ENCODE measurements at regions of chr2 and their contacts with region 1.

Region 1: GRCh38 chr2:8525582-8526402 is 156.1 kb upstream of the ID2 start:
- DNase-seq: peak; percentile 94 to 97 (median 95)
- ATAC-seq: peak; percentile 96
- H3K4me3 ChIP-seq: no peak overlapping the region
- H3K27ac ChIP-seq: peak overlapping the region; percentile 79
- H3K4me1 ChIP-seq: peaks cover 20 to 24% of the 10 kb centered on the region in 2 experiments
- H3K27me3 ChIP-seq: no peaks in the 10 kb centered on the region; a peak in 1 of 5 replicates
- CTCF ChIP-seq: peak; percentile 87 to 96 (median 90)
- EP300 ChIP-seq: peak; percentile 91
- POLR2A ChIP-seq: no peak
- RAD21 ChIP-seq: peak; percentile 97 to 99

Region 2: DNA sequence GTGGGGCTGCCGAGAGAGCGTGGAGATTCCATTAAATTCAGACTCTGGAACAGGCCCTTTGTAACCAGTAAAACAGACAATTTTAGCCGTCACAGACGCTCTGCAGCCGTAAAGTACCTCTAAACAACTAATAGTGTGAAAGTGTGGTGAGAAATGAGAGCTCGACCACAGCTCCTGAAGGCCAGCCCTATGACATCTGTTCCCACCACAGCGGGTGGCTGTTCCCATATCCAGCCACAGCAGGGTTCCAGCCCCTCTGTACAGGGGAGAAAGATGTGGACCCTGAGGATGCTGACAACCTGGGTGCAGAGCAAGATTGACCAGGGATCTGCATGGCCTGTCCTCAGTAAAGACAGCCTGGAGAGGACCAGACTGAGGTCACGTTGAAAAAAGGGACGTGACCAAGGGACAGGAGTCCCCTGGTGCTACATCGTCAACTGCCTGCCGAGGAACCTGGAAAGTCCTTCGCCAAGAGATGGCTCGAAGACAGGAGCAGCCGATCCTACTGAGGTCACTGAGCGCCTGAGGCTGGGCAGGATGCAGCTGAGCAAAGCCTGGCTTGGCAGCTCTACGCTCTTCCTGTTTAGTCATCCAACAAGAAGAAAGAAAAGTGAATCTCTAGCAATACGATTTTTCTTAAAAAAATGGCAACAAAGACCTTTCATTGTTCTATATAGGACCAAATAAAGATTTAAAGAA is 776.9 kb before region 1 on chr2:
- CTCF ChIA-PET with region 1: no interaction called
- POLR2A ChIA-PET with region 1: no interaction called
- in situ Hi-C with region 1: no loop called
- intact Hi-C with region 1: no loop called
- DNase-seq: no peak
- ATAC-seq: no peak
- H3K4me3 ChIP-seq: no peak overlapping the region
- H3K27ac ChIP-seq: no peak overlapping the region
- H3K4me1 ChIP-seq: no peaks in the 10 kb centered on the region
- H3K27me3 ChIP-seq: peaks cover 0 to 3% of the 10 kb centered on the region in 2 experiments; a peak in 1 of 5 replicates
- CTCF ChIP-seq: no peak
- EP300 ChIP-seq: no peak
- POLR2A ChIP-seq: no peak
- RAD21 ChIP-seq: no peak

Region 3: GRCh38 chr2:7881063-7881462 is 644.7 kb before region 1 on chr2:
- CTCF ChIA-PET with region 1: no interaction called
- POLR2A ChIA-PET with region 1: no interaction called
- in situ Hi-C with region 1: no loop called
- intact Hi-C with region 1: no loop called
- DNase-seq: no peak
- ATAC-seq: no peak
- H3K4me3 ChIP-seq: no peak overlapping the region
- H3K27ac ChIP-seq: no peak overlapping the region
- H3K4me1 ChIP-seq: no peaks in the 10 kb centered on the region
- H3K27me3 ChIP-seq: peaks cover 0 to 4% of the 10 kb centered on the region in 2 experiments; a peak in 2 of 5 replicates
- CTCF ChIP-seq: no peak
- EP300 ChIP-seq: no peak
- POLR2A ChIP-seq: no peak
- RAD21 ChIP-seq: no peak

Region 4: GRCh38 chr2:8544786-8545694 is 19.2 kb after region 1 on chr2:
- CTCF ChIA-PET with region 1: no interaction called
- POLR2A ChIA-PET with region 1: interaction called, 8 read pairs
- in situ Hi-C with region 1: no loop called
- intact Hi-C with region 1: loop called (anchors 2 kb)
- DNase-seq: peak; percentile 89 to 93 (median 90)
- ATAC-seq: peak; percentile 98
- H3K4me3 ChIP-seq: no peak overlapping the region
- H3K27ac ChIP-seq: no peak overlapping the region
- H3K4me1 ChIP-seq: peaks cover 11 to 31% of the 10 kb centered on the region in 2 experiments
- H3K27me3 ChIP-seq: peaks cover 0 to 3% of the 10 kb centered on the region in 2 experiments; a peak in 1 of 5 replicates
- CTCF ChIP-seq: peak; percentile 61 to 73 (median 64); a peak in 5 of 6 replicates
- EP300 ChIP-seq: peak; percentile 54; the same call in 1 of the 2 replicates
- POLR2A ChIP-seq: no peak
- RAD21 ChIP-seq: peak; percentile 68 to 71

Region 5: GRCh38 chr2:8583400-8584173 is 57.8 kb after region 1 on chr2:
- CTCF ChIA-PET with region 1: no interaction called
- POLR2A ChIA-PET with region 1: no interaction called
- in situ Hi-C with region 1: no loop called
- intact Hi-C with region 1: loop called (anchors 5 kb)
- DNase-seq: peak; percentile 97 to 99 (median 99)
- ATAC-seq: peak; percentile 99
- H3K4me3 ChIP-seq: no peak overlapping the region
- H3K27ac ChIP-seq: peak overlapping the region; percentile 49; the same call in 1 of the 3 replicates
- H3K4me1 ChIP-seq: peaks cover 19 to 47% of the 10 kb centered on the region in 2 experiments
- H3K27me3 ChIP-seq: peaks cover 3 to 31% of the 10 kb centered on the region in 2 experiments; a peak in 3 of 5 replicates
- CTCF ChIP-seq: no peak
- EP300 ChIP-seq: no peak
- POLR2A ChIP-seq: peak; percentile 62; the same call in 1 of the 2 replicates
- RAD21 ChIP-seq: no peak

Region 6: DNA sequence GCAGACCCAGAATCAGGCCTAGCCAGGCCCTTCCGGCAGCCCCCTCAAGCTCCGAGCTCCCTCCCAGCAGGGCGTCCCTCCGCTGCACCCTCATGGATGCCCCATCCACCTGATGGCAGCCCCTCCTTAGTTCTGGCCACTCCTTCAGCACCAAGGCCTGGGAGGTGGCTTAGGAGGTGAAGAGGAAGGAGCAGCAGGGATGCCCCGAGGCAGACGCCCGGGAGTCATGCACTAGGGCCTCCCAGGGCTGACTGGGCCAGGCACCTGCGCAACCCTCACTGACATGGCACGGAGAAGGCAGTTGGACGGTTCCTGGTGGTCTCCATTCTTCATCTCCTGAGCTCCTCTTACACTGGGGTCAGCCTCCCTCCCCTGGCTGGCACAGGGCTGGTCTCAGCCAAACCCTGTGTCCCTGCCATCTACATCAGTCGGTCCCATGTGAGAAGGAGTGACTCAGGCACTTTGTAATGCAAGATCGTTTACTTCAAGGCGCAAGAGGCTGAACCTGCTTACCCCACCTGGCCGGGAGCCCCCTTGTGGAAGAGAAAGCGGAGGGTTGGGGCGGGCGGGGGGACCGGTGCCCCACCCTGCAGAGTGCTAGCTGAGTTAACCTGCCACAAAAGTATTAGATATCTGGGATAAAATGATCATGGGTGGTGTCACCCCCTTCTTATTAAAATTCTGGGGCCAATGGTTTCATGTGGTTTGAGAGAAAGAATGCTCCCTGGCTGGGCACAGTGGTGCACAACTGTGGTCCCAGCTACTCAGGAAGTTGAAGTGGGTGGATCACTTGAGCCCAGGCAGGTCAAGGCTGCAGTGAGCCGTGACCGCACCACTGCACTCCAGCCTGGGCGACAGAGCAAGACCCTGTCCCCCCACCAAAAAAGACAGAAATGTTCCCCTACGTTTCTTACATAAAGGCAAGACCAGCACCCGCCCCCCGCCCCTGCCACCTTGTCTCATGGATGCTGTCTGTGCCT is 102.7 kb after region 1 on chr2:
- CTCF ChIA-PET with region 1: no interaction called
- POLR2A ChIA-PET with region 1: interaction called, 3 read pairs
- in situ Hi-C with region 1: no loop called
- intact Hi-C with region 1: loop called (anchors 2 kb)
- DNase-seq: peak; percentile 31 to 41 (median 40)
- ATAC-seq: peak; percentile 69
- H3K4me3 ChIP-seq: no peak overlapping the region
- H3K27ac ChIP-seq: no peak overlapping the region
- H3K4me1 ChIP-seq: peaks cover 3 to 44% of the 10 kb centered on the region in 2 experiments; a peak in 3 of 5 replicates
- H3K27me3 ChIP-seq: peaks cover 23 to 53% of the 10 kb centered on the region in 2 experiments; a peak in 4 of 5 replicates
- CTCF ChIP-seq: peak in 2 of 3 experiments; percentile 5 to 30; a peak in 1 of 6 replicates
- EP300 ChIP-seq: no peak
- POLR2A ChIP-seq: no peak
- RAD21 ChIP-seq: peak in 1 of 2 experiments; percentile 6; a peak in 1 of 4 replicates

Region 7: GRCh38 chr2:8761529-8762164 is 235.9 kb after region 1 on chr2:
- CTCF ChIA-PET with region 1: interaction called, 3 read pairs
- POLR2A ChIA-PET with region 1: no interaction called
- in situ Hi-C with region 1: no loop called
- intact Hi-C with region 1: loop called (anchors 1 kb)
- DNase-seq: peak; percentile 39 to 55 (median 49)
- ATAC-seq: peak; percentile 64
- H3K4me3 ChIP-seq: no peak overlapping the region
- H3K27ac ChIP-seq: no peak overlapping the region
- H3K4me1 ChIP-seq: no peaks in the 10 kb centered on the region
- H3K27me3 ChIP-seq: no peaks in the 10 kb centered on the region
- CTCF ChIP-seq: peak; percentile 28 to 69 (median 58); a peak in 5 of 6 replicates
- EP300 ChIP-seq: no peak
- POLR2A ChIP-seq: no peak
- RAD21 ChIP-seq: peak; percentile 63 to 71

Measured in K562 (cell line).